ENCODE measurements at regions of chr7 and their contacts with region 1.

Region 1: GRCh38 chr7:64802699-64803098 is 8.5 kb downstream of the ZNF138 start:
- DNase-seq: no peak
- ATAC-seq: no peak
- H3K4me3 ChIP-seq: no peak overlapping the region
- H3K27ac ChIP-seq: no peak overlapping the region
- H3K4me1 ChIP-seq: no peaks in the 10 kb centered on the region
- H3K27me3 ChIP-seq: no peaks in the 10 kb centered on the region
- CTCF ChIP-seq: no peak

Region 2: DNA sequence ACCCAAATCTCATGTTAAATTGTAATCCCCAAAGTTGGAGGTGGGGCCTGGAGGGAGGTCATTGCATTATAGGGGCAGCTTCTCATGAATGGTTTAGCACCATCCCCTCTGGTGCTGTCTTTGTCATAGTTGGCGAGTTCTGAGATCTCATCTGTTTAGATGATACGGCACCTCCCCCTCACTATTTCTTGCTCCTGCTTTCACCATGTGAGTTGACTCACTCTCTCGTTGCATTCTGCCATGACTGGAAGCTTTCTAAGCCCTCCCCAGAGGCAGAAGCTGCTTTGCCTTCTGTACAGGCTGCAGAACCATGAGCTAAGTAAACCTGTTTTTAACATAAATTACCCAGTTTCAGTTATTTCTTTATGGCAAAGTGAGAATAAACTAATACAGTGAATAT is 27.4 kb before region 1 on chr7:
- intact Hi-C with region 1: loop called in 1 of 3 experiments (anchors 2 kb)
- DNase-seq: no peak
- ATAC-seq: no peak
- H3K4me3 ChIP-seq: no peak overlapping the region
- H3K27ac ChIP-seq: no peak overlapping the region
- H3K4me1 ChIP-seq: no peaks in the 10 kb centered on the region
- H3K27me3 ChIP-seq: no peaks in the 10 kb centered on the region
- CTCF ChIP-seq: no peak

Measured in pancreas (tissue), 10 donors.